ENCODE measurements at regions of chr11 and their contacts with region 1.

Region 1: DNA sequence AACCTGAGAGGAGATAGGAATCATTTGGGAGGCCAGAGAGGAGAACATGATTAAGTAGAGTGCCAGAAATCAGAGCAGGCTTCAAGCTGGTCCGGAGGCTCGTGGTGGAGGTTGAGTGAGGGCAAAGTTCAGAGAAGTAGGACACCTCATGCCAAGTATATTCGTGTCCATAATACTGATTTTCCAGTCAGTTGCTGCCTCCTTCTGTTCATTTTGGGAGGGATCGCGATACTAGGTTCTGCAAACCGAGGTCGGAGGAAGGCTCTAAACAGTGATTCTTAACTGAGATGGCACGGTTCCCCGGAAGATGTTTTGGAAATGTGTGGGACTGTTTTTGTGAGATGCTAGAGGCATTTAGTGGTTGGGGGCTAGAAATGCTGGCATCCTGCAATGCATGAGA is 13.6 kb upstream of the CD3E start:
- DNase-seq: peak; percentile 45 to 53
- ATAC-seq: peak; percentile 89

Region 2: GRCh38 chr11:118180300-118180703 is 110.6 kb before region 1 on chr11:
- intact Hi-C with region 1: no loop called
- DNase-seq: peak in 1 of 2 donors; percentile 47
- ATAC-seq: peak; percentile 13

Region 3: GRCh38 chr11:118359295-118359958 is 68.5 kb after region 1 on chr11 and contains the start of gene UBE4A:
- intact Hi-C with region 1: loop called (anchors 10 kb)
- DNase-seq: peak; percentile 97 to 98
- ATAC-seq: peak; percentile 98
- total RNA-seq, gene UBE4A: 40.3 to 45.6 TPM

Measured in left colon (tissue), 2 donors.